ENCODE measurements at regions of chr18 and their contacts with region 1.

Region 1: DNA sequence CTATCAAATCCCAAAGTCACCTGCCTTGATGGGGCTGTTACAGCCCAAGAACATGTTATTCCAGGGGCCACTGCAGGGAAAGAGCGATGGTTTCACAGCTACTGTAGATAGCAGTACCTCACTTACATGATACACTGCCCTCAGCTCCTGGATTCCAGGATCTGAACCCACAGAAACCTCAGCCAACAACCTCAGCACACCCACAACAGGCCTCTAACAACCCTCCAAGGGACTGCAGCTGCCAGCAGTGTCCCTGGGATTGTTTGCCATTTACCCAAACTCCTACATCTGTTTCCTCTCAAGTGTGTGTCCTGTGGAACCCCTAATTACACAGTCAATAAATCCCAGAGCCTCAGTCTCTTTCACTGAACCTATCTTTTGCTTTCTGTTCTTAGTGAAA is 28.2 kb downstream of the OSBPL1A start:
- DNase-seq: no peak
- ATAC-seq: no peak
- H3K4me3 ChIP-seq: no peak overlapping the region
- H3K27ac ChIP-seq: no peak overlapping the region
- H3K4me1 ChIP-seq: no peaks in the 10 kb centered on the region
- H3K27me3 ChIP-seq: no peaks in the 10 kb centered on the region
- CTCF ChIP-seq: no peak
- POLR2A ChIP-seq: no peak

Region 2: DNA sequence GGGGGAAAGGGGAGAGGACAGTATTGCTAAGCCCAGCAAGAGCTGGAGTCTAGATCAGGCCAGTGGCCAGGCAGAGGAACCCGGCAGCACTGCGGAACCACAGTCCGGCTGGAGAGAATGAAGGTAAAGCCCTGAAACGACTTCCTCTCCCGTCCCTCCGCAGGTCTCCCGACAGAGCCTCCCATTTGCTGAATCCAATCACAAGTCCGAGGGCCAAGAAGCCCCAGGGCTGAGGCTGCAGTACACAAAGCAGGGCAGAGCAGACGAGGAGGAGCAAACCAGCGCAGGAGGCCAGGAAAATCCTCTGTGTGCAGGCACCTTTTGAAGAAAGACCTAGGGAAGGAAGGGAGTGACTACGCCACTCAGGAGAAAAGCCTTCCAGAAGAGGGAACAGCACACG is 76.2 kb before region 1 on chr18:
- intact Hi-C with region 1: loop called in 1 of 10 experiments (anchors 10 kb)
- DNase-seq: no peak
- ATAC-seq: no peak
- H3K4me3 ChIP-seq: no peak overlapping the region
- H3K27ac ChIP-seq: no peak overlapping the region
- H3K4me1 ChIP-seq: no peaks in the 10 kb centered on the region
- H3K27me3 ChIP-seq: no peaks in the 10 kb centered on the region
- CTCF ChIP-seq: no peak
- POLR2A ChIP-seq: no peak

Region 3: GRCh38 chr18:24413148-24413547 is 43.7 kb after region 1 on chr18:
- intact Hi-C with region 1: loop called in 2 of 10 experiments (anchors 5 to 10 kb)
- DNase-seq: no peak
- ATAC-seq: peak in 1 of 4 donors; percentile 38
- H3K4me3 ChIP-seq: no peak overlapping the region
- H3K27ac ChIP-seq: no peak overlapping the region
- H3K4me1 ChIP-seq: no peaks in the 10 kb centered on the region
- H3K27me3 ChIP-seq: peaks cover 0 to 14% (median 0%) of the 10 kb centered on the region in 9 donors
- CTCF ChIP-seq: peak in 8 of 12 donors; percentile 18 to 46 (median 38)
- POLR2A ChIP-seq: no peak

Region 4: GRCh38 chr18:24432618-24433017 is 63.2 kb after region 1 on chr18:
- intact Hi-C with region 1: loop called in 1 of 10 experiments (anchors 10 kb)
- DNase-seq: no peak
- ATAC-seq: no peak
- H3K4me3 ChIP-seq: no peak overlapping the region
- H3K27ac ChIP-seq: no peak overlapping the region
- H3K4me1 ChIP-seq: peaks cover 0 to 10% (median 1%) of the 10 kb centered on the region in 12 donors
- H3K27me3 ChIP-seq: no peaks in the 10 kb centered on the region
- CTCF ChIP-seq: no peak
- POLR2A ChIP-seq: no peak